ENCODE measurements at regions of chr11 and their contacts with region 1.

Region 1: DNA sequence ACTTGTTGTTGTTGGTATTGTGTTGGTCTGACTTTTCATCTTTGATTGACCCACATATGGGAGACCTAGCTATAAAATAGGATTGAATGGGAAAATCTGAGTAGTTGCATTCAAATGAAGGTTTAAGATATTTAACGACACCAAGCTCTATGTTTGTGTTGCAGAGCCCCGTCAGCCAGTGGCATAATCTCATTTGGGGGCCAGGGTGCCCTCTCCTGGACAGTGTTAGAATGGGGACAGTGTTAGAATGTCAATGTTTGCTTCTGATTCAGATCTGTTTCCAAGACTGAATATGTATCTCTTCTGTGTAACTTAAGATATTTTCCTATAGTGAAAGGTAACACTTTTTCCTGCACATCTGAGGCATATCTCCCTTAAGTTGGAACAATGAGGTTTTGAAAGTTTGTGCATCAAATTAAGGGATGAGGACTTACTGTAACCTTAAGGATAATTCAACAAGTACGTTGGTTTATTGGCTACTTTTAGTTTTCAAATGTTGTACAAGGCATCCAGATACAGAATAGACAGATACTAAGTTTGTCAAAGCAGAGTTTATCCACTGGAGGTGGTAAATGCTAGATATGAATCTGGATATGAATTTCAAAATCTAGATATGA is 5.3 kb upstream of the OR52M1 start:
- DNase-seq: peak; percentile 11
- H3K4me3 Mint-ChIP-seq: no peak overlapping the region
- H3K27ac Mint-ChIP-seq: no peak overlapping the region
- H3K4me1 Mint-ChIP-seq: no peaks in the 10 kb centered on the region
- H3K27me3 Mint-ChIP-seq: peaks cover 12% of the 10 kb centered on the region

Region 2: DNA sequence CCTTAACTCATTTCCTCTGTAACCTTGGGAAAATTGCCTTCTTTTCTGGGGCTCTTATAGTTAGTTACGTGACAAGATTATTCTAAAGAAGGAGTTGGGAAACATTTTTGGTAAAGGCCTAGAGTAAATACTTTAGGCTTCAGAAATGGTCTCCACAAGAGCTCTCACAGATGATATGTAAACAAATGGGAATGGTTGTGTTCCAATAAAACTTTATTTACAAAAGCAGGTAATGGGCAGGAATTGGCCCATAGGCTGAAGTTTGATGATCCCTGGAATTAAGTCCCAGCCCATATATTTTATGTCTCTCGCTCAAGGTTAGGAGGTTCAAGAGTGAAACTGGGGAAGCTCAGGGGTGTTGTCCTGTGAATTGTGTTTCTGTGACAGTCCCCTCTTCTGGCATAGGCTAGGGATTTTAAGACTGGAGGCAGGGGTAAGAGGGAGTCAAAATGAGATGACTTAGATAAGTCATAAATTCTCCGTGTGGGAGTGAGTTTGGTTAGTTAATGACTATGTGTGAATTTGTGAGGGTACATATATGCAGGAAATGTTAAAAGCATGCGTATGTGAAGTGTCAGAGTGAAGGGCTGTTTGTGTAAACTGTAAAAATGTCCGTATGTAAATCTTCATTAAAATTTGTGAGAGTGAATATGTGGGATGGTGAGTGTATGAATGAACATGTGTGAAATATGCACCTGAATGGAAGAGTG is 164.1 kb before region 1 on chr11:
- intact Hi-C with region 1: loop called (anchors 5 kb)
- DNase-seq: no peak
- H3K4me3 Mint-ChIP-seq: no peak overlapping the region
- H3K27ac Mint-ChIP-seq: no peak overlapping the region
- H3K4me1 Mint-ChIP-seq: no peaks in the 10 kb centered on the region
- H3K27me3 Mint-ChIP-seq: no peaks in the 10 kb centered on the region